ENCODE measurements at regions of chr7 and their contacts with region 1.

Region 1: DNA sequence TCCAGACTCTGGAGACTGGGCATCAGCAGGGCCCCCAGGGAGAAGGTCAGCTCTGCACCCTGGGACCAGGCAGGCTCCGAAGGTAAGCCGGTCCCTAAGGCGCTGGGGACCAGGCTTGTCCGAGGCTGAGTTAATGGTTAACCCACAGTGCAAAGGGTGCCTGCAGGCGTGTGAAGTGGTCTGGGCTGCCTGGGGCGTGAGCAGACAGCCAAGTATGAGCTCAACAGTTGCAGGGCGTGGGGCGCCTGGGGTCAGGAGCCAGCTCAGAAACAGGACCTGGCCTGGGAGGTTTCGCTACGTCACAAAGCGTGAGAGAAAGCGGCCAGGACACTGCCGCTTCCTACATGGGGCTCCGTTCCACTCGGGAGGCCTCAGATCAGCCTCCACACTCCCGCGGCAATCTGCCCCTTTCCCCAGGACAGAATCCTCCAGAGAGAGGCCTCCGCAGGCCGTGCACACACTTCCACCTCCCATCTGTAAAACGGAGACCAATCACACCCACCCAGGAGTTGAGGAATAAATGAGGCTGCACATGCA is 16.0 kb downstream of the PDGFA start:
- DNase-seq: peak; percentile 94
- ATAC-seq: peak; percentile 98
- H3K4me3 ChIP-seq: peak overlapping the region in 2 of 3 experiments; percentile 7 to 54; a peak in 2 of 6 replicates
- H3K27ac ChIP-seq: no peak overlapping the region
- H3K4me1 ChIP-seq: peaks cover 38% of the 10 kb centered on the region
- H3K27me3 ChIP-seq: no peaks in the 10 kb centered on the region
- CTCF ChIP-seq: no peak
- EP300 ChIP-seq: peak in 1 of 2 experiments; percentile 69; a peak in 2 of 4 replicates
- POLR2A ChIP-seq: no peak
- RAD21 ChIP-seq: 0 out of 2 replicates have a peak, but pooled peaks have one; percentile 20

Region 2: GRCh38 chr7:435630-436366 is 67.8 kb before region 1 on chr7:
- CTCF ChIA-PET with region 1: no interaction called
- POLR2A ChIA-PET with region 1: interaction called, 9 read pairs
- in situ Hi-C with region 1: no loop called
- intact Hi-C with region 1: loop called (anchors 5 kb)
- DNase-seq: no peak
- ATAC-seq: peak; percentile 45
- H3K4me3 ChIP-seq: peak overlapping the region; percentile 10 to 72 (median 56)
- H3K27ac ChIP-seq: no peak overlapping the region
- H3K4me1 ChIP-seq: peaks cover 49% of the 10 kb centered on the region
- H3K27me3 ChIP-seq: peaks cover 16 to 64% of the 10 kb centered on the region in 2 experiments
- CTCF ChIP-seq: 0 out of 2 replicates have a peak, but pooled peaks have one; percentile 4
- EP300 ChIP-seq: no peak
- POLR2A ChIP-seq: no peak
- RAD21 ChIP-seq: no peak

Region 3: GRCh38 chr7:471866-472639 is 31.6 kb before region 1 on chr7:
- CTCF ChIA-PET with region 1: no interaction called
- POLR2A ChIA-PET with region 1: interaction called, 16 read pairs
- in situ Hi-C with region 1: no loop called
- intact Hi-C with region 1: no loop called
- DNase-seq: peak; percentile 91
- ATAC-seq: peak; percentile 90
- H3K4me3 ChIP-seq: peak overlapping the region in 1 of 3 experiments; percentile 57; a peak in 2 of 6 replicates
- H3K27ac ChIP-seq: peak overlapping the region; percentile 80
- H3K4me1 ChIP-seq: peaks cover 55% of the 10 kb centered on the region
- H3K27me3 ChIP-seq: 0 out of 5 replicates have a peak, but pooled peaks cover 0 to 1% of the 10 kb centered on the region in 2 experiments
- CTCF ChIP-seq: no peak
- EP300 ChIP-seq: peak in 1 of 2 experiments; percentile 53; a peak in 2 of 4 replicates
- POLR2A ChIP-seq: peak in 1 of 2 experiments; percentile 41; a peak in 2 of 4 replicates
- RAD21 ChIP-seq: 0 out of 2 replicates have a peak, but pooled peaks have one; percentile 12

Measured in HepG2 (cell line).